Activated T-helper 1 cell treated with anti-CD3 and anti-CD28 coated beads, Interleukin-12 subunit alpha, Interleukin-12 subunit beta, Interleukin-2, Interleukin-4 antibody, amounts not matched to agents 30 ng/mL and 10 ng/mL and 1 ng/mL, durations not matched to agents 14 hours and 24 hours and 36 hours (primary cell): ENCODE measurements at regions of chr10 and their contacts with region 1.

Region 1: DNA sequence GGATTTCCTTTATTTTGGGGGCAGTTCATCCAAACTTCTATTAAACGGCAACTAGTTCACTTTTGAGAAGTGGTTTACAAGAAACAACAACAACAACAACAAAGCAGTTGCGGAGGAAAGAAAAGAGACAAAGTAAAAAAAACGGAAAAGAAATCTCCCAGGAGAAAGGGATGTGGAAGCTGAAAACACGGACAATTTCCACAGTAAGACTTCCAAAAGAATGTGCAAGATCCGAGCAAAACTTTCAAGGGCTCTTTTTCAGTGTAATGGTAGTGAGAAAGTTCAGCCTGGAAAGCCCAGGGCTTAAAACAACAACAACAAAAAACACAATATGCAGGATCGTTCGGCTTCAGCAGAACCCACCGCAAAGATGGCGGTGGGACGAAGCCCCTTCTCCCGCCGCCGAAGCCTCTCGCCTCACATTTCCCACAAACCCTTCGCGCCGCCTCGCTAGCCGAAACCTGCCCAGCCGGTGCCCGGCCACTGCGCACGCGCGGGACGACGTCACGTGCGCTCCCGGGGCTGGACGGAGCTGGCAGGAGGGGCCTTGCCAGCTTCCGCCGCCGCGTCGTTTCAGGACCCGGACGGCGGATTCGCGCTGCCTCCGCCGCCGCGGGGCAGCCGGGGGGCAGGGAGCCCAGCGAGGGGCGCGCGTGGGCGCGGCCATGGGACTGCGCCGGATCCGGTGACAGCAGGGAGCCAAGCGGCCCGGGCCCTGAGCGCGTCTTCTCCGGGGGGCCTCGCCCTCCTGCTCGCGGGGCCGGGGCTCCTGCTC is at the start of gene TNKS2:
- DNase-seq: peak; percentile 93
- H3K4me3 Mint-ChIP-seq: peak within 1 kb of the TSS; percentile 97
- H3K27ac Mint-ChIP-seq: peak within 1 kb of the TSS; percentile 98
- H3K4me1 Mint-ChIP-seq: peaks cover 62% of the 10 kb centered on the region
- H3K27me3 Mint-ChIP-seq: no peaks in the 10 kb centered on the region
- total RNA-seq, gene TNKS2: 29.9 and 30.6 TPM in 2 replicates

Region 2: DNA sequence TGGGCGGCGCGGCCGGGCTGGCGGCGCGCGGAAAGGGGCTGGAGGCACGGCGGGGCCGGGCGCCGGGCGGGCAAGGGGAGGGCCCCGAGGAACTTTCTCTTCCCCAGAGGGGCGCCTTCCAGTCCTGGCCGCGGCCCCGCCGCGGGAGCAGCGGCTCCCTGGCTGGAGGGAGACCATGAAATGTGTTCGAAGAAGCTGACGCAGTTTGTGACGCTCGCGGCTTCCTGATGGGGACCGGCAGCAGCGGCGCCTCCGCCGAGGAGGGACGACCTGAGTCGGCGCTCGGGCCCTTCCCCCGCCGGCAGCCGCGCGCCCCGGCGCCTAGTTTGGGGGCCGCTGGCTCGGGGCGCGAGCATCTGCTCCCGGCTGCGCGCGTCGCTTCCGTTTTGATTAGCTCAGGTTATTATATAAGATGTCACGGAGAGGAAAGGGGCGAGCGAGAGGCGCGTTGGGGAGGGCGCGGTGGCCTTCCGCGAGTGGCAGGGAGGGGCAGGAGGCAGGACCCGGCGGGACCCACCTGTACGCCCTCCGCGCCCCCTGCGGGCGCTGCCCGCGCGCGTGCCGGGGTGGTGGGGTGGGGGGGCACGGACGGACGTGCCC is 634.7 kb before region 1 on chr10:
- intact Hi-C with region 1: loop called (anchors 5 kb)
- DNase-seq: peak; percentile 66
- H3K4me3 Mint-ChIP-seq: peak overlapping the region; percentile 90
- H3K27ac Mint-ChIP-seq: peak overlapping the region; percentile 90
- H3K4me1 Mint-ChIP-seq: peaks cover 39% of the 10 kb centered on the region
- H3K27me3 Mint-ChIP-seq: peaks cover 12% of the 10 kb centered on the region

Region 3: GRCh38 chr10:91409869-91410637 is 388.0 kb before region 1 on chr10 and contains the start of gene HECTD2:
- intact Hi-C with region 1: loop called (anchors 2 kb)
- DNase-seq: peak; percentile 75
- H3K4me3 Mint-ChIP-seq: peak within 1 kb of the TSS; percentile 91
- H3K27ac Mint-ChIP-seq: peak within 1 kb of the TSS; percentile 95
- H3K4me1 Mint-ChIP-seq: peaks cover 25% of the 10 kb centered on the region
- H3K27me3 Mint-ChIP-seq: peaks cover 11% of the 10 kb centered on the region
- total RNA-seq, gene HECTD2: 6.2 and 6.4 TPM in 2 replicates

Region 4: DNA sequence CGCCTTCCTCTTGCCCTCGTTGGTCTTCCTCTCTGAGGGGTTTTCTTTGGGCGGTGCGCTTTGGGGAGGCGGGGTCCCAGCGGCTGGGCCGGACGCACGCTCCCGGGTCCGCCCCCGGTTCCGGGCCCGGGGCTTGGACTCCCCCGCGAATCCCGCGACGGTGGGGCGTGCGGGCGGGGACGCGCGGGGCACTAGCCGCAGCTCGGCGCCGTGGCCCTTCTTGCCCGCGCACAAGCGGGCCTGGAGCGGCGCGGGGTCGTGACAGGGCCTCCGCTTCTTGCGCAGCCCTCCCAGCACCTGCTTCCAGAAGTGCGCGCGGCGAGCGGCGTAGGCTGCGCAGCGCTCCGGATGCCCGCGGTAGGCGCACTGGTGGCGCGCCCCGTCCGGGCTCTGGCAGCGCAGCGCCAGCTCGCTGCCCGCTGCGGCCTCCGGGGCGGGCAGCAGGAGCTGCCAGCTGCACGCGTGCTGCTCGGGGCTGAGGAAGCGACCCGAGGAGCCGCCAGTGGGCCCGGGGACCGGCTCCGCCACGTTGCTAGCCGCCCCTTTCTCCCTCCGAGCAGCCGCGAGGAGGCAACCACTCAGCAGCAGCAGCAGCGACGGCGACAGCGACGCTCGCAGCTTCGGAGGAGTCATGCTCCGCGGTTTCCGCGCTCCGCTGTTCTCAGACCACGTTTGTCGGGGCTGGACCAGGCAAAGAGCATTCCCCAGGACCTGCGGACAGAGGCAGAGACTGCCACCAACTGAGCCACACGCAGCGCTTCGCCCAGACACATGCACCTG is 110.5 kb after region 1 on chr10:
- intact Hi-C with region 1: loop called (anchors 1 kb)
- DNase-seq: peak; percentile 65
- H3K4me3 Mint-ChIP-seq: peak overlapping the region; percentile 87
- H3K27ac Mint-ChIP-seq: peak overlapping the region; percentile 82
- H3K4me1 Mint-ChIP-seq: peaks cover 29% of the 10 kb centered on the region
- H3K27me3 Mint-ChIP-seq: peaks cover 14% of the 10 kb centered on the region

Region 5: DNA sequence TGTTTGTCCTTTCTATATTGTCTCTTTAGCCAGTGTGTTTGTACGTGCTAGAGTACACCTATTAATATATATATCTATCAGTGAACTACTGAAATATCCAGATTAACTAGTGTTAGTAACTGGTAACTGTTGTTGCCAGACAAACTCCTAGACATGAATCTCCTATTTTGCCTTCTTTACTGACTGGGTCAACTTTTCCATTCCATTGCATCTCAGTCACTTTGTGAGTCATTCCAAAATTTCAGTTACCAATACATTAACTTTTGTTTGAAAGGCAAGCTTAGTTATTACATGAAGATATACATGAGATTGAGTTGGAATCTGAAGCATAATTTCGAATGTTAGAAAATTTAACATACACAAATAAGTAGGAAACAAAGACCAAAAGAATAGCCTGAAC is 176.9 kb after region 1 on chr10:
- intact Hi-C with region 1: loop called (anchors 1 kb)
- DNase-seq: no peak
- H3K4me3 Mint-ChIP-seq: peak overlapping the region; percentile 16
- H3K27ac Mint-ChIP-seq: peak overlapping the region; percentile 83
- H3K4me1 Mint-ChIP-seq: peaks cover 65% of the 10 kb centered on the region
- H3K27me3 Mint-ChIP-seq: no peaks in the 10 kb centered on the region

Region 6: GRCh38 chr10:92290837-92291615 is 493.0 kb after region 1 on chr10 and contains the starts of genes CPEB3 and MARCHF5:
- intact Hi-C with region 1: loop called (anchors 2 kb)
- DNase-seq: peak; percentile 92
- H3K4me3 Mint-ChIP-seq: peak within 1 kb of the TSS; percentile 93
- H3K27ac Mint-ChIP-seq: peak within 1 kb of the TSS; percentile 86
- H3K4me1 Mint-ChIP-seq: peaks cover 27% of the 10 kb centered on the region
- H3K27me3 Mint-ChIP-seq: no peaks in the 10 kb centered on the region
- total RNA-seq, gene CPEB3: 2.5 and 2.7 TPM in 2 replicates
- total RNA-seq, gene MARCHF5: 22.5 and 23.9 TPM in 2 replicates